ENCODE measurements at regions of chr7 and their contacts with region 1.

Region 1: DNA sequence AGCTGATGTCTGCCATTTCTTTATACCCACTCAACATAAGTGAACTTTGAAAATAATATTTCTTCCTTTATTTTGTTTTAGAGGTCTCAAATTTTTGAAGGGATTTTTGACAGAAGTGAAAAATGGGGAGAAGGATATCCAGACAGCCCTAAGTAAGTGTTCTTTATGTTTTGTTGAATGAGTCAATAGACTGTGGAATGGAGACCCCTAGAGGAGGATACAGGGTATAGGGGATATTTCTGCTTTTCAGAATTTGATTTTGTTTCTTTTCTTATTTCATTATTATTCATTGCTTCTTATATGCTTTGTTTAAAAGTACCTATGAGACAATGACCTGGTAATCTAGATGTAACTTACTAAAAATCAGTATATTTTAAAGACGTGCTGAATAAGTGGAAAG is 34.4 kb downstream of the PLEKHA8 start:
- DNase-seq: peak in 2 of 4 donors; percentile 32 to 43
- ATAC-seq: peak; percentile 89
- H3K4me3 ChIP-seq: no peak overlapping the region
- H3K27ac ChIP-seq: no peak overlapping the region
- H3K4me1 ChIP-seq: peaks cover 0 to under 1% of the 10 kb centered on the region in 2 donors
- H3K27me3 ChIP-seq: no peaks in the 10 kb centered on the region
- CTCF ChIP-seq: peak in 1 of 2 donors; percentile 40

Region 2: DNA sequence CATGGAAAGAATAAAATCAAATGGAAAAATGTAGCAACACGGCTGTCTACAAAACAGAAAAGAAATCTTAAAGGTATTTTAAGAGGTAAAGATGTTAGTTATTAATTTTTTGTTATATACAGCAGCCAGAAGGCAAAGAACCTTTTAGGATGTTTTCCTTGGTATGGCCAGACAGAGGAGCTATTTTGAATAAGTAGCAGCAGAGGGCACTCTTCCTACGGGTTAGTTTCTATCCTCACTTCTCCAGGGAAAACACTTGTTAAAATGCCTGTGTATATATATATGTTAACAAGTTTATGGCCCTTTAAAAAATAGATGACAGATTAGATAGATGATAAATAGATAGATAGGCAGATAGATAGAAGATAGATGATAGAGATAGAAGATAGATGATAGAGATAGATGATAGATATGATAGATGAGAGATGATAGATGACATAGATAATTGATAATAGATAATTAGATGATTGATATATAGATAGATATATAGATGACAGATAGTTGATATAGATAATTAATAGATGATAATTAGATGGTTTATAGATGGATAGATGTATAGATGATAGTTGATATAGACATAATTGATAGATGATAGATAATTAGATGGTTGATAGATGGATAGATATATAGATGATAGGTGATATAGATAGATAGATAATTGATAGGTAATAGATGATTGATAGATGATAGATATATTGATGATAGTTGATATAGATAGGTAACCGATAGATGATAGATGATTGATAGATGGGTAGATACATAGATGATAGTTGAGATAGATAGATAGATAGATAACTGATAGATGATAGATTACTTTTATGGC is 314.1 kb before region 1 on chr7:
- intact Hi-C with region 1: loop called in 1 of 2 experiments (anchors 10 kb)
- DNase-seq: peak in 1 of 4 donors; percentile 32
- ATAC-seq: peak; percentile 92
- H3K4me3 ChIP-seq: no peak overlapping the region
- H3K27ac ChIP-seq: peak overlapping the region in 1 of 2 donors; percentile 18
- H3K4me1 ChIP-seq: peaks cover 0 to 4% of the 10 kb centered on the region in 2 donors
- H3K27me3 ChIP-seq: no peaks in the 10 kb centered on the region
- CTCF ChIP-seq: peak; percentile 24 to 46

Region 3: DNA sequence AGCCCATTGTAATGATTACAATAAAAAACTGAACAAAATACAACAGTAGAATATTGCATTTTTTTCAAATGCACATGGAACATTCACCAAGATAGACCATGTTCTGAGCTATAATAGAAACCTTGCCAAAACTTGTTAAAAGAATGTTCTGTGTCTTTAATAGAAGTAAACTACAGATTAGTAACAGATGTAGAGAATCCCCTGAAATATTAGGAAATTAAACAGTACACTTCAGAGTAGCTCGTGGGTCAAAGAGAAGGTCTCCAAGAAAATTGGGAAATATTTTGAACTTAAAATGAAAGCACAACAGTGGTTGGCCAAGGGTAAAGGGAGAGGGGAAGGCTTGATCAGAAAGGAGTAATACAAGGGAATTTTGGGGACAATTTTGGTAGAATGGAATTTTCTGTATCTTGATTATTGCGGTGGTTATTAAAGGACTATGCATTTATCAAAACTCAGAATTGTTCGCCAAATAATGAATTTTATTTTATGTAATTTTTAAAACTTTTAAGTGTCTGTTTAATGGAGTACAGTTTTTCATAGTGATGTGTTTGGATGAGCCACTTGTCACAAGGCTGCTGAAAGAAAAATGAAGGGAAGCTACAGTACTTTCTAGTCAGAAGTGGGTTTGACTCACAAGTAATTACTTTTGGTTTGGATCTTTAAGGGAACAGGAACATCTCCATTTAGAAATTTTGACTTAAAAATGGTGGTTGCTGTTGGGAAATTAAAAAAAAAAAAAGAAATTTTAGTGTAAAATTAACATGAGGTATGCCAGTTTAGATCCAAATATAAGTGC is 24.2 kb before region 1 on chr7:
- intact Hi-C with region 1: no loop called
- DNase-seq: peak in 1 of 4 donors; percentile 44
- ATAC-seq: peak; percentile 26
- H3K4me3 ChIP-seq: no peak overlapping the region
- H3K27ac ChIP-seq: no peak overlapping the region
- H3K4me1 ChIP-seq: no peaks in the 10 kb centered on the region
- H3K27me3 ChIP-seq: no peaks in the 10 kb centered on the region
- CTCF ChIP-seq: no peak

Measured in left lung (tissue), 14 donors.